ENCODE measurements at regions of chr9 and their contacts with region 1.

Region 1: DNA sequence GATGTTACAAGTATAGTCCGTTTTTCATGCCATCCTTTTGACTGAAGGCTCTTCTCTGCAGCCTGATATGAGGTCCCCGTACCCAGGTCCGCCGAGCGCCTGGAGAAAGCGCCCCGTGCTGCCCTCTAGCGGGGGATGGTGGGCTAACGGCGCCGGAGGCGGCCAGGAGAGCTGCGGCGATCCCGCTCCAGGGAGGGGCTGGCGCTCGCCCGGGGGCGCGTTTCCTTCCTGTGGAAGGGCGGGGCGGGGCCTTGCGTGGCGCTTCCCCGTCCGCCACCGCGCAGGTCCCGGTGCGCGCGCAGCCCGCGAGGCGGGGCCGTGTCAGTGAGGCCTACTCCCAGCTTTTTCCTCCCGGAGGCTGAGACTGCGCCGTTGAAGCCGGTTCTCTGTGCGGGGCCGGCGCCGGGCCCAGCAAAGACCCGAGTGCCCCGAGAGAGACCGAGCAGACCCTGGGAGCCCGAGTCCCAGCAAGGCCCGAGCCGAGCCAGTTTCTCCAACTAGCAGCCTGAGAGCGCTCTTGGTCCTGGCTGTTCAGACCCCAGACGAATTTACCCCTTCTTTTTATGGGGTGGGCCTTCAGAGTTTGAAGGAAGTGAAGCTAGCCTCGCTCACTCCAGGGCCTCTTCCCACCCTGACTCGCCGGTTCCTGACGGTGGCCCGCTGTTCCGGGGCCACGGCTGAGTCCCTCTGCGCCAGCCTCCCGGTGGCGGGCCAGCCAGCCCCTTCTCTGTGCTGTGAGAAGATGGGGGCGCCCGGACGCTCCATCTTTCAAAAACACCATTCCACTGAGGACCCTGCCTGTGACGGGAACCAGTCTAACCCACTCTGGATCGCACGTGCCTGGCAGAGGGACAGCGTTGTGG is 9.7 kb upstream of the PHF2 start:
- DNase-seq: peak; percentile 98
- H3K4me3 ChIP-seq: peak overlapping the region; percentile 59
- H3K27ac ChIP-seq: peak overlapping the region; percentile 95
- H3K4me1 ChIP-seq: peaks cover 3% of the 10 kb centered on the region
- H3K27me3 ChIP-seq: no peaks in the 10 kb centered on the region
- CTCF ChIP-seq: peak; percentile 93

Region 2: GRCh38 chr9:92954049-92954861 is 612.4 kb before region 1 on chr9:
- CTCF ChIA-PET with region 1: no interaction called
- POLR2A ChIA-PET with region 1: no interaction called
- intact Hi-C with region 1: loop called (anchors 10 kb)
- DNase-seq: no peak
- H3K4me3 ChIP-seq: no peak overlapping the region
- H3K27ac ChIP-seq: no peak overlapping the region
- H3K4me1 ChIP-seq: peaks cover 4% of the 10 kb centered on the region
- H3K27me3 ChIP-seq: no peaks in the 10 kb centered on the region
- CTCF ChIP-seq: no peak

Region 3: DNA sequence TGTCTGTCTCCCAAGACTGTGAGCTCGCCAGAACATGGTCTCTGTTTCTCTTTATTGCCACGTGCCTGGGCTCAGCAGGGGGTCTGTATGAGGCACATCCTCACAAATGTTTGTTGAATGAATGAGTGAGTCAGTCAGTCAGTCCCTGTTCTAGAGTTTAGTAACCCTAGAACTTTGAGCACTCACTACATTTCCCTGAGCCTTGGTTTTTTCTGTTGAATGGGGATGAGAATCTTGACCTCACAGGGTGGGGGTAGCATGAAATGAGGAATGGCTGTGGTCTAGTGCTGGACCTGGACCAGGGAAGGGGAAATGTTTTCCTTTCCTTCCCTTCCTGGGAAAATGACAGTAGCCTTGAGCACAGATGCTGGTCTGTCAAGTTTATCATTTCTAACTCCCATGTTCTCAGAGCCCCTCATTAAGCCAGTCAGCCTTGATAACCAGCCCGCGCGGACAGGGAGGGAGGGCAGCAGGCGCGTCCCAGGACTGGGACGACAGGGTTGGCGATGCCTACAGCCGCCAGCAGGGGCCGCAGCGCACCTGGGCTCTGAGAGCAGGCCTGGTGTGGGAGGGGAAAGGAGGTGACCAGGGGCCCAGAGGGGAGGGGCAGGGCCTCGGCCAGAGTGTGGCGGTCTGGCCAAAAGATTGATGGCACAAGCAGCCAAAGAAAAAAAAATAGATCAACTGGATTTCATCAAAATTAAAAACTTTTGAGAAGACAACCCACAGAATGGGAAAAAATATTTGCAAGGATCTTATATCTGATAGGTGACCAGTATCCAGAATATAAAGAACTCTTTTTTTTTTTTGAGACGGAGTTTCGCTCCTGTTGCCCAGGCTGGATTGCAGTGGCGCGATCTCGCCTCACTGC is 406.8 kb before region 1 on chr9:
- CTCF ChIA-PET with region 1: interaction called, 3 read pairs
- POLR2A ChIA-PET with region 1: no interaction called
- intact Hi-C with region 1: loop called (anchors 10 kb)
- DNase-seq: peak; percentile 69
- H3K4me3 ChIP-seq: no peak overlapping the region
- H3K27ac ChIP-seq: no peak overlapping the region
- H3K4me1 ChIP-seq: no peaks in the 10 kb centered on the region
- H3K27me3 ChIP-seq: no peaks in the 10 kb centered on the region
- CTCF ChIP-seq: peak; percentile 98

Region 4: GRCh38 chr9:93453047-93453914 is 113.4 kb before region 1 on chr9 and contains the start of gene FAM120AOS:
- CTCF ChIA-PET with region 1: interaction called, 9 read pairs
- POLR2A ChIA-PET with region 1: no interaction called
- intact Hi-C with region 1: loop called (anchors 5 kb)
- DNase-seq: peak; percentile 98
- H3K4me3 ChIP-seq: peak within 1 kb of the TSS; percentile 96
- H3K27ac ChIP-seq: peak within 1 kb of the TSS; percentile 91
- H3K4me1 ChIP-seq: peaks cover 7% of the 10 kb centered on the region
- H3K27me3 ChIP-seq: no peaks in the 10 kb centered on the region
- CTCF ChIP-seq: no peak
- total RNA-seq, gene FAM120AOS: 34.5 and 35.8 TPM in 2 replicates

Region 5: GRCh38 chr9:93520523-93520922 is 46.1 kb before region 1 on chr9:
- CTCF ChIA-PET with region 1: no interaction called
- POLR2A ChIA-PET with region 1: no interaction called
- intact Hi-C with region 1: no loop called
- DNase-seq: no peak
- H3K4me3 ChIP-seq: no peak overlapping the region
- H3K27ac ChIP-seq: no peak overlapping the region
- H3K4me1 ChIP-seq: no peaks in the 10 kb centered on the region
- H3K27me3 ChIP-seq: no peaks in the 10 kb centered on the region
- CTCF ChIP-seq: no peak

Measured in A673 (cell line).